Psoas muscle (tissue), 8 donors: ENCODE measurements at regions of chr21 and their contacts with region 1.

Region 1: GRCh38 chr21:28069450-28069923 is 923.2 kb downstream of the LTN1 start:
- DNase-seq: no peak
- ATAC-seq: peak; percentile 59 to 73 (median 68)
- H3K4me3 ChIP-seq: peak overlapping the region; percentile 69
- H3K27ac ChIP-seq: peak overlapping the region; percentile 87
- H3K4me1 ChIP-seq: peaks cover 17% of the 10 kb centered on the region
- H3K27me3 ChIP-seq: no peaks in the 10 kb centered on the region
- CTCF ChIP-seq: no peak

Region 2: DNA sequence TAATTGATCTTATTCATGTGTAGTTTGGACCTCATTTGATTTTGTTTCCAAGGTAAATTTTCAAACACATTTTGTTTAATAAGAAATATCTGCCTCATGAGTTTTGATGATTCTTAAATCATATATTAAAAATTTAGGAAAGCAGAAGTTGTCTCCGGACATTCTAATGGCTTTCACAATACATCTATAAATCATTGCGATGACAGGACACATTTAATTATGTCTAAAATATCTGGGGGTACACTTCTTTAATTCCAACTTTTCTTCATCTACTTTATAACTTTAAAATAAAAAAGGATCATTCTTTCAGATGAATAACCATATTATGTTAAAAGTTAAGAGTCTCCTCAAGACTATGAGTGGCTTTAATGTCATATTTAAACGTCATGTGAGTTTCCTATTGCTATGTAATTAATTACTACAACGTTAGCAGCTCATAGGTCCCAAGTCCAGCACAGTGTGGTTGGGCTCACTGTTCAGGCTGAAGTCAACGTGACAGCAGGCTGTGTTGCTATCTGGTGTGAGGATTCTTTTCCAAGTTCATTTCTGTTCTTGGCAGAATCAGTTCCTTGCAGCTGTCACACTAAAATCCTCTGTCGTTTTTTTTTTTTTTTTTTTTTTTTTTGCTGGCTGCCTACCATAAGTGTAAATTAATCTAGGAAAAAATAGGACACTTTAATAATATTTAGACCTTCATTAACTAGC is 29.7 kb after region 1 on chr21:
- intact Hi-C with region 1: loop called in 1 of 2 experiments (anchors 2 kb)
- DNase-seq: peak; percentile 32 to 73
- ATAC-seq: peak; percentile 97 to 98 (median 98)
- H3K4me3 ChIP-seq: peak overlapping the region; percentile 20
- H3K27ac ChIP-seq: peak overlapping the region; percentile 72
- H3K4me1 ChIP-seq: peaks cover 23% of the 10 kb centered on the region
- H3K27me3 ChIP-seq: no peaks in the 10 kb centered on the region
- CTCF ChIP-seq: no peak

Region 3: GRCh38 chr21:28118570-28118969 is 49.1 kb after region 1 on chr21:
- intact Hi-C with region 1: loop called in 1 of 2 experiments (anchors 5 kb)
- DNase-seq: no peak
- ATAC-seq: peak in 2 of 4 donors; percentile 62 to 68
- H3K4me3 ChIP-seq: no peak overlapping the region
- H3K27ac ChIP-seq: peak overlapping the region; percentile 70
- H3K4me1 ChIP-seq: peaks cover 11% of the 10 kb centered on the region
- H3K27me3 ChIP-seq: no peaks in the 10 kb centered on the region
- CTCF ChIP-seq: no peak